Ascending aorta (tissue), 2 donors: ENCODE measurements at regions of chr16 and their contacts with region 1.

Region 1: DNA sequence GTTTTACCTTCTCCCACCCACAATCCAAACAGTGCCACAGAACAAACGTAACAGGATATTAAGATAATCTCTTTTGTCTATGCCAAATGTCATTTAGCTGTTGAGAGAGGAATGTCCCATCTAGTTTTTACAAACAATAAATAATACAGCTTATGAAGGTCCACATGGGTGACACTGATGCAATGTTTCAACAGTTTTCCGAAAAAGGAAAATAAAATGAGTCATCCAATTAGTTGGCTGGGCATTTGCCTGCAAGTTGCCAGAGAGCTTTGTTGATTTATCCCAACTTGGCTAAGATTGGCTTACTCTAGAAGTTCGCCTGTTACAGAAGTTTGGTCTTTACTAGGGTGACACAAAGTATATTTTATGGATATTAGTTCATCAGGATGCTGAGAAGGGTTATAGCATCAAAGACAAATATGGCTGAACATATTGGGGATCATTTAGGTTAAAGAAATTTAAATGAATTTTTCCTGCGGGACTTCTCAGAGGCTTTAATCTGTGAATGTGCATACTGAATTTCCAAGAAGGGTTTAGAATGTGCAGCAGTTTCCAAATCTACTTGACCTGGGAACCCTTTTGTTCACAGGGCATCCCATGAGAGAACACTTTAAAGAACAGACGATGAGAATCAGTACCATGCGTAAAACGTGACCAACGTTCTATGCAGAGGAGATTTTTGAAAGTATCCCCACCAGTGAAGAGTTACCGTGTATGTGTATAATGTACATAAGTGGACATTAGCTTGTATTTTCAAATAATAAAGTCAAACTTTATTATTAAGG is 73.1 kb downstream of the CDH13 start:
- DNase-seq: peak in 1 of 2 donors; percentile 73
- H3K4me3 ChIP-seq: no peak overlapping the region
- H3K27ac ChIP-seq: peak overlapping the region; percentile 88 to 89
- H3K4me1 ChIP-seq: peaks cover 11 to 47% of the 10 kb centered on the region in 2 donors
- H3K27me3 ChIP-seq: no peaks in the 10 kb centered on the region
- CTCF ChIP-seq: no peak

Region 2: DNA sequence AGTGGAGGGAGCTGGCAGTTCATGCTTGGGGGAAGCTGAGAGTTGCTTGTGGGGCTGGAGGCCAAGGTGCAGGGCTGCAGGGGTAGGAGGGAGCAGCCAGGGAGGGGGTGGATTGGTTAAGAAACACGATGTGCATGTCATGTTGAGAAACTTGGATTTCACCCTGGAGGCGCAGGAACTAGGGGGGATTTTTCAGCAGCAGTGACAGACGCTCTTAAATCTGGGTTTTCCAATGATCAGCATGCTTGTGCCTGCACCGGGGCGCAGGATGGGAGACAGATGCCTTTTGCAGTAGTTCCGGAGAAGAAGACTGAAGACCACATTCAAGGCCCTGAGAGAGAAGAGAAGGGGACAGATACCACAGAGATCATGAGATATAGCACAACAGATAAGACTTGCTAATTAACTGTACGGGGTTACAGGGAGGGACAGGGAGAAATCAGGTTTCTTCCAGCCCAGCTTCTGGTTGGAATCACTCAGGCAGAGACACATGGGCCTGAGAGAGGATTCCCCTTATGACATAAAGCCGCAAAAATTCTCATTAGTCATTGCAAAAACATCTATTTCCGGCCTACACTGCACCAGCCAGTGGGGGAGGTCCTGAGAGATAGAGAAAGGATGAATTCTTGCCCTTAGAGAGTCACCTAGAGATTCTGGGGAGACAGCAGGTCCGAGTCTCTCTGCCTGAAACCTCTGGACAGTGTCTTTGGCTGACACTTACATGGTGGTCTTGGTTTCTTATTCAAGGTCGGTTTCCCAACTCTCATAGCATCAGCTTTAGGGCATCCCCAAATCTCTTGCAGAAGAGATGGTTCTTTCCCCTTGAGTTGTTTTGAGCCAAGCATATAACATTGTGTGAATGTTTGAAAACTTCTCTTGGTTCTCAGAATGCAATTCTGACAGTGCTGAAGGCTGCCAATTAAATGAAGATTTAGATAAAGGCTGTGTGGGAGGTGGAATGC is 46.1 kb before region 1 on chr16:
- intact Hi-C with region 1: loop called (anchors 5 kb)
- DNase-seq: no peak
- H3K4me3 ChIP-seq: no peak overlapping the region
- H3K27ac ChIP-seq: peak overlapping the region in 1 of 2 donors; percentile 16
- H3K4me1 ChIP-seq: peaks cover 0 to 28% of the 10 kb centered on the region in 2 donors
- H3K27me3 ChIP-seq: no peaks in the 10 kb centered on the region
- CTCF ChIP-seq: no peak

Region 3: GRCh38 chr16:82738699-82739098 is 38.8 kb after region 1 on chr16:
- intact Hi-C with region 1: loop called (anchors 5 kb)
- DNase-seq: no peak
- H3K4me3 ChIP-seq: no peak overlapping the region
- H3K27ac ChIP-seq: peak overlapping the region in 1 of 2 donors; percentile 81
- H3K4me1 ChIP-seq: peaks cover 8 to 32% of the 10 kb centered on the region in 2 donors
- H3K27me3 ChIP-seq: no peaks in the 10 kb centered on the region
- CTCF ChIP-seq: peak in 2 of 3 experiments; percentile 28 to 30